Common myeloid progenitor, CD34-positive (primary cell): ENCODE measurements at regions of chr16 and their contacts with region 1.

Region 1: DNA sequence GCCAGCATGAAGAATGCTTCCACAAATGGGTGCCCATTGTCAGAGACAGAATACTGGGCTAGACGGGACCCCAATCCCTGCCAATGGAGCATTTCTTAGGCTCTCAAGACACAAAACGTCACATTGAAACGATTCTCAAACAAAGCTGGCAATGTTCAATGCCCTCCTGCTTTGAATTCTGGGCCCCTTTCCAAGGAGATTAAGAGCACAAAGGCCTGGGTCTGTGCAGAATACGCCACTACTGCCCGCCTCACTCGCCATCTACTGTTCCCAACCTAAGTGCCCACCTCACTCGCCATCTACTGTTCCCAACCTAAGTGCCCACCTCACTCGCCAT is 9.7 kb downstream of the CFAP20 start:
- DNase-seq: no peak
- H3K4me3 ChIP-seq: no peak overlapping the region
- H3K27ac ChIP-seq: no peak overlapping the region
- H3K4me1 ChIP-seq: peaks cover 3 to 19% (median 13%) of the 10 kb centered on the region in 4 experiments
- H3K27me3 ChIP-seq: no peaks in the 10 kb centered on the region

Region 2: DNA sequence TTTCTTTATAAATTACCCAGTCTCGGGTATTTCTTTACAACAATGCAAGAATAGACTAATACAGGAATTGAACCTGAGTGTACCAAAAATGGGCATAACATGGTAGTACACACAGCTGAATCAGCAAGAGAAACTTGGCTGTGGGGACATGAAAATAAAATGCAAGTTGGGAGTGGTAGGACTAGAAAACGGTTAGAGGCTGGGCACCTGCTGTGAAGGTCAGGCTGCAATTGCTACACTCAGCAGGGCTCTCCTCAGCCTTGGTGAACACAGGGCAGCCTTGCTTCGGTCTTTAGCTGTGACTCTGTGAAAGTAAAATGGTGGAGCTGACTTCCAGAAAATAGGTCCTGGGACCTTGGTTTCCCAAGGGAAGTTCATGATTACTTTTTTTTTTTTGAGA is 194.2 kb before region 1 on chr16:
- CTCF ChIA-PET with region 1: no interaction called
- POLR2A ChIA-PET with region 1: no interaction called
- DNase-seq: no peak
- H3K4me3 ChIP-seq: no peak overlapping the region
- H3K27ac ChIP-seq: no peak overlapping the region
- H3K4me1 ChIP-seq: no peaks in the 10 kb centered on the region
- H3K27me3 ChIP-seq: no peaks in the 10 kb centered on the region

Region 3: GRCh38 chr16:58013206-58013956 is 106.1 kb before region 1 on chr16:
- CTCF ChIA-PET with region 1: interaction called, 45 read pairs
- POLR2A ChIA-PET with region 1: no interaction called
- DNase-seq: no peak
- H3K4me3 ChIP-seq: no peak overlapping the region
- H3K27ac ChIP-seq: no peak overlapping the region
- H3K4me1 ChIP-seq: no peaks in the 10 kb centered on the region
- H3K27me3 ChIP-seq: no peaks in the 10 kb centered on the region

Region 4: DNA sequence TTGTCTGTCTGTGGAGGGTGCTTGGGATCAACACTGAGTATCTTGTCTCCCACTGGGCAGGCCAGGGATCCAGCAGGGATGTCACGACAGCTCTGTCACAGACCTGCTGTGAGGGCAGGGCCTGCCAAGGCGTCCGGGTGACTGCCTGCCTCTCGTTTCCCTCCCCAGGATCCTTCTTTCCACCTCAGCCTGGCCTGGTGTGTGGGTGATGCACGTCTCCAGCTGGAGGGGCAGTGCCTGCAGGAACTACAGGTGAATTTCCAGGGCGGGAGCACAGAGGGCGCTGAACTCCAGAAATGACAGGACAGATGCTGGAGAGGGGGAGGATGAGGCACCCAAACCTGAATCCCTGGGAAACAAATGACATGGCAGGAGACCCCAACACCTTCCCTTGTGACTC is 100.7 kb before region 1 on chr16:
- CTCF ChIA-PET with region 1: interaction called, 45 read pairs
- POLR2A ChIA-PET with region 1: no interaction called
- DNase-seq: no peak
- H3K4me3 ChIP-seq: no peak overlapping the region
- H3K27ac ChIP-seq: no peak overlapping the region
- H3K4me1 ChIP-seq: peaks cover 0 to 8% (median 3%) of the 10 kb centered on the region in 4 experiments
- H3K27me3 ChIP-seq: peaks cover 0 to 4% (median 0%) of the 10 kb centered on the region in 5 experiments

Region 5: GRCh38 chr16:58025351-58026138 is 93.9 kb before region 1 on chr16 and contains the start of gene MMP15:
- CTCF ChIA-PET with region 1: interaction called, 40 read pairs
- POLR2A ChIA-PET with region 1: no interaction called
- DNase-seq: peak; percentile 38 to 62 (median 49)
- H3K4me3 ChIP-seq: peak within 1 kb of the TSS; percentile 47 to 80 (median 71)
- H3K27ac ChIP-seq: no peak within 1 kb of the TSS
- H3K4me1 ChIP-seq: peaks cover 0 to 43% (median 34%) of the 10 kb centered on the region in 4 experiments
- H3K27me3 ChIP-seq: peaks cover 0 to 41% (median 12%) of the 10 kb centered on the region in 5 experiments

Region 6: DNA sequence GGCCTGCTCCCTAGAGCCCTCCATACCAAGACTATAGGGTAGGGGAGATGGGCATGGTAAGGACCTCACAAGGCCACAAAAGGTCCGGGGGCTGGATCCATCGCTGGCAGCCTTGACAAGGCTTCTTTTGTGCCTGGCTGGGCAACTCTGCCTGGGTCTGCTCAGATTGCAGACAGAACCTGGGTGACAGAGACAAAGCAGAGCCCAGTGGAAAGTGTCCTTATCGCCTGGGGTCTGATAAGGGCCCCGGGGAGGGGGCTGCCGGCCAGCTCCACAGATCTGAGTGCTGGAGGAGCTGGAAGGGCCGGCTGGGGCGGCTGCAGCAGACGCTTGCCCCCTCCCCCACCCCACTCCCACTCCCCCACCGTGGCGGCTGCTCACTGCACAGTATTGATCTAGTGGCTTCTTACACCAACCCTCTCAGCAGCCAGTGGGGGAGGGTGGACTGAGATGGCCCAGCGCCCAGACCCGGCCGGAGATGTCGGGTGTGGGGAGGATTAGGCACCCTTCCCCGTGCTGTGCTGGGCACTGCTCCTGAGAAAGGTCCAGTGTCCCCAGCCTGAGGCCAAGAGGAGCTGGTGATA is 86.7 kb before region 1 on chr16:
- CTCF ChIA-PET with region 1: interaction called, 22 read pairs
- POLR2A ChIA-PET with region 1: interaction called, 6 read pairs
- DNase-seq: no peak
- H3K4me3 ChIP-seq: no peak overlapping the region
- H3K27ac ChIP-seq: no peak overlapping the region
- H3K4me1 ChIP-seq: peaks cover 0 to 7% (median 5%) of the 10 kb centered on the region in 4 experiments
- H3K27me3 ChIP-seq: peaks cover 0 to 7% (median 0%) of the 10 kb centered on the region in 5 experiments

Region 7: GRCh38 chr16:58098207-58099096 is 21.0 kb before region 1 on chr16:
- CTCF ChIA-PET with region 1: interaction called, 10 read pairs
- POLR2A ChIA-PET with region 1: no interaction called
- DNase-seq: no peak
- H3K4me3 ChIP-seq: no peak overlapping the region
- H3K27ac ChIP-seq: no peak overlapping the region
- H3K4me1 ChIP-seq: peaks cover 0 to 13% (median 10%) of the 10 kb centered on the region in 4 experiments
- H3K27me3 ChIP-seq: no peaks in the 10 kb centered on the region

Region 8: DNA sequence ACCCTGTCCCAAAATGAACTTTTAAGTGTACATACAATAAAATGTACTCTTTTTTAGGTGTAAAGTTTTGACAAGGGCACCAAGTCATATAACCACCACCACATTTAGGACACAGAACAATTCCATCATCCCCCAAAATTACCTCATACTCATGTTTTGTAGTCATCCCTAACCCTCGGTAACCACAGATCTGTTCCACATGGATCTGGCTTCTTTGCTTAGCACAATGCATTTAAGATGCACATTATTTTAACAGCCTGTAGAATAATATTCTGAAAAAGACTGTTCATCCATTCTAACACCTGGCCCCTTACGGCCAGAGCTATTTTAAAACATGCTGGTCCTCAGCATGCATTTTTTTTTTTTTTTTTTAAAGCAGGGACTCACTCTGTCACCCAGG is 34.9 kb after region 1 on chr16:
- CTCF ChIA-PET with region 1: no interaction called
- POLR2A ChIA-PET with region 1: no interaction called
- DNase-seq: no peak
- H3K4me3 ChIP-seq: no peak overlapping the region
- H3K27ac ChIP-seq: no peak overlapping the region
- H3K4me1 ChIP-seq: no peaks in the 10 kb centered on the region
- H3K27me3 ChIP-seq: no peaks in the 10 kb centered on the region